BJ (cell line): ENCODE measurements at regions of chr9 and their contacts with region 1.

Region 1: GRCh38 chr9:136312436-136312835 is 8.5 kb upstream of the CCDC187 start:
- DNase-seq: no peak
- H3K4me3 ChIP-seq: no peak overlapping the region
- H3K27me3 ChIP-seq: no peaks in the 10 kb centered on the region
- CTCF ChIP-seq: peak; percentile 92

Region 2: DNA sequence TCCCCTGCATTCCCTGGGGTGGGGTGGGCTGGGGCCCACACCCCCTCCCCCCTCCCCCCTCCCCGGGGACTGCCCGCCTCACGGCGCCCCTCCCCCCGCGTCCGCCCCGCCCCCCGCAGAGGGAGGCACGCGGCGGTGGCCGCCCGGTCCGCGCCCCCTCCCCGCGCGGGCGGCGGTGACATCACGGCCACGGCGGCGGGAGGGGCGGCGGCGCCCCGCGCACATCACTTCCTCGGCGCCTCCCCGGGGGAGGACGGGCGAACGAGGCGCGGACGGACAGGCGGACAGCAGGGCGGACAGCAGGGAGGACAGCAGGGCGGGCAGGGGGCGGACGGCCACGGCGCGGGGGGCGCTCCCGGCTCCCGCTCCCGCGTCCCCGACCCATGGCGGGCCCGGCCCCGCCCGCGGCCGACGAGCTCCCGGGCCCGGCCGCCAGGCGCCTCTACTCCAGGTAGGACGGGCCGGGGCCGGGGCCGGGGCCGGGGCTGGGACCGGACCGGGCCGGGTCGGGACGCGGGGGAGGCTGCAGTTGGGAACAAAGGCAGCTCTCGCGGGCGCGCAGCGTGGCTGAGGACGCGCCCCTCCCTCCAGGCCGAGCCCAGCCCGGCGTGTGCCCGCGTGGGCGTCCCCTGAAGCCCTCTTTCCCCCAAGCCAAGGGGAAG is 15.0 kb after region 1 on chr9 and contains the start of gene GPSM1:
- CTCF ChIA-PET with region 1: interaction called, 93 read pairs
- POLR2A ChIA-PET with region 1: no interaction called
- DNase-seq: no peak
- H3K4me3 ChIP-seq: peak within 1 kb of the TSS; percentile 88
- H3K27me3 ChIP-seq: no peaks in the 10 kb centered on the region
- CTCF ChIP-seq: no peak
- polyA plus RNA-seq, gene GPSM1: 19.2 and 33.1 TPM in 2 replicates

Region 3: GRCh38 chr9:136345281-136346156 is 33.1 kb after region 1 on chr9:
- CTCF ChIA-PET with region 1: interaction called, 24 read pairs
- POLR2A ChIA-PET with region 1: no interaction called
- DNase-seq: no peak
- H3K4me3 ChIP-seq: no peak overlapping the region
- H3K27me3 ChIP-seq: no peaks in the 10 kb centered on the region
- CTCF ChIP-seq: peak; percentile 71

Region 4: DNA sequence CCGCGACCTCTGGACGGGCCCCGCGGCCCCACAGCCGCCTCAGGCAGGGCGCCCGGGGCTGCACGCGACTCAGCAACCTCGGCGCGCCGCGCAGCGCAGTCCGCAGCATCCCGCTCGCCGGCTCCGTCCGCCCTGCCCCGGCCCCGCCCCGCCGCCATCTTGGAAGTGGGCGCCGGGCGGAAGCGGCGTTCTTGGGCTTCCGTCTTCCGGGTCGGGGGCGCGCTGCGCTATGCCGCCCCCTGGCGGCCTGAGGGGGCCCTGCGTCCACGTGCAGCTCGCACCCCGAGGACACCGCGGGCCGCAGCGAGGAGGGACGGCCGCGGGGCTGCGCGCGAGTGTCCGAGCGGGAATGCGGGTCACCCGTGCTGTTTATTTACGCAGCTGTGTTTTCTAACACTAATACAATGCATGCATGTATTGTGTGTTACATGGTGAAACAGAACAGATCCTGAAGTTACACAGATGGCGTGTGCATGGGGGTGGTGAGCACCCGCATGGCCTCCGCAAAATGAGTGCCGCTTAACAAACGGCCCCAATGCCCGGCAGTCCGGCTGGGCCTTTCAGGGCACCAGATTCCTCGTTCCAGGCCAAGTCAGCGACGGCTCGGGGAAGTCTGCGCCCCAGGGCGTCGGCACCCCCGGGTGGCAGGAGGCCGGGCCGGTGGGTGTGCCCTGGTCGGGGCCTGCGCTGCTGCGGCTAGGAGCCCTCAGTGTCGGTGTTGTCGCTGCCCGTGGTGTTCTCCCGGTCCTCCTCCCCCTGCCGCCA is 51.4 kb after region 1 on chr9 and contains the start of gene DNLZ:
- CTCF ChIA-PET with region 1: interaction called, 68 read pairs
- POLR2A ChIA-PET with region 1: no interaction called
- DNase-seq: no peak
- H3K4me3 ChIP-seq: peak within 1 kb of the TSS; percentile 78
- H3K27me3 ChIP-seq: no peaks in the 10 kb centered on the region
- CTCF ChIP-seq: peak; percentile 75
- polyA plus RNA-seq, gene DNLZ: 7.2 and 8.5 TPM in 2 replicates

Region 5: GRCh38 chr9:136372561-136373299 is 60.3 kb after region 1 on chr9:
- CTCF ChIA-PET with region 1: interaction called, 30 read pairs
- POLR2A ChIA-PET with region 1: no interaction called
- DNase-seq: peak; percentile 39
- H3K4me3 ChIP-seq: peak overlapping the region; percentile 35
- H3K27me3 ChIP-seq: no peaks in the 10 kb centered on the region
- CTCF ChIP-seq: peak; percentile 49

Region 6: GRCh38 chr9:136400038-136400834 is 87.8 kb after region 1 on chr9 and contains the start of gene SNAPC4:
- CTCF ChIA-PET with region 1: interaction called, 84 read pairs
- POLR2A ChIA-PET with region 1: no interaction called
- DNase-seq: peak; percentile 17
- H3K4me3 ChIP-seq: peak within 1 kb of the TSS; percentile 59
- H3K27me3 ChIP-seq: no peaks in the 10 kb centered on the region
- CTCF ChIP-seq: peak; percentile 58
- polyA plus RNA-seq, gene SNAPC4: 1.6 and 1.7 TPM in 2 replicates